ENCODE measurements at regions of chr2 and their contacts with region 1.

Region 1: GRCh38 chr2:85804583-85804982 is 50.8 kb downstream of the ATOH8 start:
- DNase-seq: no peak
- H3K4me3 ChIP-seq: no peak overlapping the region
- H3K27ac ChIP-seq: no peak overlapping the region
- H3K4me1 ChIP-seq: no peaks in the 10 kb centered on the region
- H3K27me3 ChIP-seq: no peaks in the 10 kb centered on the region
- CTCF ChIP-seq: peak in 5 of 6 experiments; percentile 46 to 55 (median 49)
- POLR2A ChIP-seq: no peak

Region 2: GRCh38 chr2:85445316-85446295 is 359.0 kb before region 1 on chr2:
- intact Hi-C with region 1: no loop called
- DNase-seq: no peak
- H3K4me3 ChIP-seq: no peak overlapping the region
- H3K27ac ChIP-seq: peak overlapping the region; percentile 37 to 81 (median 66)
- H3K4me1 ChIP-seq: peaks cover 10 to 20% (median 15%) of the 10 kb centered on the region in 3 donors
- H3K27me3 ChIP-seq: no peaks in the 10 kb centered on the region
- CTCF ChIP-seq: no peak
- POLR2A ChIP-seq: no peak

Region 3: DNA sequence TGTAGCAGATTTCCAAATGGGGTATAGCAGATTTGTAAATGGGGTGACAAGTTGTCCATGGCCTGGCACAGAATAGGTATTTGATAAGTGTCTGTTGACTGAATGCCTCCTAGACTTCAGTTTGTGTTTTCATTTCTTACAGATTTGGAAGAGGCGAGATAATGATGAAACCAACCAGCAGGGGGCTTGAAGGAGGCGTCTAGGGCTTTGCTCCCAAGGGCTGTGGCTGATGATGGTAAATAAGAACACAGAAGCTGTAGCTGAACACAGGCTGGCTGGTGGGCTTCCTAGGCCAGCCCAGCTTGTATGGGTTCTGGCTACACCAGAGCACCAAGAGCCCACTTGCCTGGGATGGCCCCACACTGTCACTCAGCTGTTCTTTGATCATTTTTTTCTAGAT is 156.0 kb before region 1 on chr2:
- intact Hi-C with region 1: no loop called
- DNase-seq: no peak
- H3K4me3 ChIP-seq: no peak overlapping the region
- H3K27ac ChIP-seq: peak overlapping the region in 1 of 4 donors; percentile 31
- H3K4me1 ChIP-seq: peaks cover 0 to 11% (median 5%) of the 10 kb centered on the region in 3 donors
- H3K27me3 ChIP-seq: no peaks in the 10 kb centered on the region
- CTCF ChIP-seq: peak in 3 of 6 experiments; percentile 18 to 42 (median 26)
- POLR2A ChIP-seq: no peak

Region 4: GRCh38 chr2:85750587-85751575 is 53.7 kb before region 1 on chr2:
- intact Hi-C with region 1: loop called (anchors 10 kb)
- DNase-seq: peak; percentile 30
- H3K4me3 ChIP-seq: peak overlapping the region in 1 of 4 donors; percentile 2
- H3K27ac ChIP-seq: peak overlapping the region in 2 of 4 donors; percentile 41 to 43
- H3K4me1 ChIP-seq: peaks cover 14 to 83% (median 48%) of the 10 kb centered on the region in 3 donors
- H3K27me3 ChIP-seq: peaks cover 0 to 61% (median 2%) of the 10 kb centered on the region in 4 donors
- CTCF ChIP-seq: peak; percentile 18 to 85 (median 74)
- POLR2A ChIP-seq: no peak

Region 5: DNA sequence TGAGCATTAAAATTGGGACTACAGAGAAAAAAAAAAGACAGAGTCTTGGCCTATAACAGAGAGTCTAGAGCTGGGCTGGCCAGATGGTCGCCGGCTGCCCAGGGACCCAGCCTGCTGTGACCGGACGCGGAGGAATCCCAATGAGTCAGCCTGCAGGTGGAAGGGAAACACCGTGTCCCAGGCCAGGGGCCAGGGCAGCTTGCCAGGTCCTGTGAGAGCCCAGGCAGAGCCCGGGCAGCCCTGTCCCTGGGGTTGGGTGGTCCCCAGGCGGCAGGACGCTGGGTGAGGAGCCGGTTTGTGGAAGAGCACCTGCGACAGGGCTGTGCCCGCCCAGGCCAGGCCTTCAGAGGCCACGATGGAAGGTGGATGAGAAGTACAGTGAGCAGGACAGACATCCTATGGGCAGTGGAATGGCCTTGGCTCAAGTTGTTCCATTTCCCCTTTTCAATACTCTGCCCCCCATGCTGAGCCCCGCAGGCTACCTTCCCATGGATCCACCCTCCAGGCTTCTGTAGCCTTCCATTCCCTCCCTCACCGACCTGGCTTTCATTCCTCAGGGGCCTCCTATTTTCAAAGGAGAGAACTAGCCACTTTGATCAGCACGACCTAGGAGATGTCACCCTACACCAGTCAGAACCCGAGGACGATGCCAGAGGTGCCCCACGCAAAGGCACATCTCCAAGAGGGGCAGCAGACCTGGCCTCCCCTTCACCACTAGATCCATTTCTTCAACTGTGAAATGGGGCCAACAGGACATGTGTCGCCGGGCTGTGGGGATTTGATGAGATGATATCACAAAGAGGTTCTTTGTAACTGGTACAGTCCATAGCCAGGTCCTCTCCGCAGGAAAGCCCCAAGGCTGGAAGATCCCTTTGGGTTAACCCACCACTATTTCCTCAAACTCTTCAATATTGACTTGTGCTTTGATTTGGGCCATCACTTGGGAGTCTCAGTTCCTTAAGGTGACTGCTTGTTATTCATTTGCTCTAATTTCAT is 213.6 kb after region 1 on chr2:
- intact Hi-C with region 1: no loop called
- DNase-seq: no peak
- H3K4me3 ChIP-seq: no peak overlapping the region
- H3K27ac ChIP-seq: no peak overlapping the region
- H3K4me1 ChIP-seq: peaks cover 0 to 16% (median 6%) of the 10 kb centered on the region in 3 donors
- H3K27me3 ChIP-seq: no peaks in the 10 kb centered on the region
- CTCF ChIP-seq: no peak
- POLR2A ChIP-seq: no peak

Measured in esophagus squamous epithelium (tissue), 5 donors.